Sigmoid colon (tissue), 7 donors: ENCODE measurements at regions of chr2 and their contacts with region 1.

Region 1: GRCh38 chr2:27281855-27282559 is at the start of gene TRIM54:
- DNase-seq: no peak
- H3K4me3 ChIP-seq: no peak within 1 kb of the TSS
- H3K27ac ChIP-seq: no peak within 1 kb of the TSS
- H3K4me1 ChIP-seq: no peaks in the 10 kb centered on the region
- H3K27me3 ChIP-seq: peaks cover 0 to 35% (median 4%) of the 10 kb centered on the region in 3 donors
- CTCF ChIP-seq: no peak
- EP300 ChIP-seq: no peak
- POLR2A ChIP-seq: no peak
- total RNA-seq, gene TRIM54: 0.41 TPM in 1 of 4 donors, not detected in the others

Region 2: DNA sequence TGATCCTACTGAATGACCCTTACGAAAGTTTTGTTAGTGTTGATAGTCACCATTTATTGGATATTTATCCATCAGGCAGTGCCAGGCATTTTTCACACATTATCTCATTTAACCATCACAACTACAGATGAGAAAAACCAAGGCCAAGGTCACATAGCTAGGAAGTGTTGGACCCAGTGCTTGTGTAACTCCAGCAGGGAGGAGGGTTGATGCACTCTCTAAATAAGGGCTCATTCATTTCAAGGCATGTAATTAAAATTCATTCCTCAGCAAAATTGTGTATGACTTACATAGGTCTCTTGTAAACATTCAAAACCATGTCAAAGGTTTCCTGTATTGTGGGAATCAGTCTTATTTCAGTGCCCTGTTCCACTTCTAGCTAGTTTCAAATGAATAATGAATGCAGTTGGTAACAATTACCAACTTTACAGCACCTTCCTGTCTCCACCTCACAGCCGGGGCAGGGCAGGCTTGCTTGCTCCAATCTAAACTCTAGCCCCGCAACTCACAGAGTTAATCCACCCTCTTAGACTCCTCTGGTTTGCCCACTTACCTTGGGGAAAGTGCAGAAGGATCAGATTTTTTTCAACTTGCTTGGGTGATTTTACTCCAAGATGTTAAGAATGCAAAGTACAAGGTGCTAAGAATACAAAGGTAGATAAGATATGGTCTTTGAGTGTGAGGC is 317.4 kb before region 1 on chr2:
- intact Hi-C with region 1: loop called (anchors 5 kb)
- DNase-seq: no peak
- H3K4me3 ChIP-seq: no peak overlapping the region
- H3K27ac ChIP-seq: no peak overlapping the region
- H3K4me1 ChIP-seq: peaks cover 0 to under 1% (median 0%) of the 10 kb centered on the region in 4 donors
- H3K27me3 ChIP-seq: peaks cover 0 to 11% (median 0%) of the 10 kb centered on the region in 3 donors
- CTCF ChIP-seq: no peak
- EP300 ChIP-seq: no peak
- POLR2A ChIP-seq: no peak

Region 3: DNA sequence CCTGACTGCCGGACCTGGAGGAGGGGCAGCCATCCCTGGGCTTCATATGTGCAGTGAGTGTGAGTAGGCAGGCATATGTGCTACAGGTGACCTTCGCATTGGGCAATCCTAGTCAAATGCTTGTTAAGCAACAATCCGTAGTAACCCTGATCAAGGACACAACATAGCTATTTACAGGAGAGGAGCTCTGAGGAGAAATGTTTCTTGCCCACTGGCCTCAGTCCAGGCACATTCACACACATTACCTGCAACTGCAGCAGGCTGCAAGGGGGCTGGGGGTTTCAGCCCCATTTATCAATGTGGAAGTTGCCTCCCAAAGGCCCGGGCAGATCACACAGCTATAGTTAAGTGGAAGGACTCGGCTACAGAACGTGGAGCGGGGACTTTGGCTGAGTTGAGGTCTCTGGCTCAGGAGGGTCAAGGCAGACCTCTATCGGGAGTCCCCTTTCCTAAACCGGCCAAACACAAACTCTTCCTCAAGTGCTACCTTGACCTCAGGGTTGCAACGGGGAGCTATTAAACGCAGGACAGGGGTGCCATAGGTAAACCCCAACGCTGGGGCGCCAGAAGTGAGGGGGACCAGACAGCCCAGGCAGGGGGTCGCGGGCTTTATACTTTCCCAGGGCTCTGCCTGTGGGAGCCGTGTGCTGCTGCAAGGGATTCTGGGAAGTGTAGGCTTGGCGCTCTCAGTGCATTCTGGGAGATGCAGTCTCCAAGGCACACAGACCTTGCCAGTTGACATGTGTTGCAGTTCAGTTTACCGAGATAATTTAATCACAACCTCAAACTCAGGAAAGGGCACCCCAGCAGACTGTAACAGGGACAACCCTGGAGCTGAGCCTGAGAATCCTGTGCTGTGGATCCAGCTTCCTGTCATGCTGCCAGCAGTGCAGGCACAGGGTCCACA is 186.0 kb before region 1 on chr2:
- intact Hi-C with region 1: loop called (anchors 1 kb)
- DNase-seq: no peak
- H3K4me3 ChIP-seq: peak overlapping the region; percentile 6 to 44 (median 34)
- H3K27ac ChIP-seq: peak overlapping the region in 1 of 4 donors; percentile 25
- H3K4me1 ChIP-seq: peaks cover 0 to 12% (median 6%) of the 10 kb centered on the region in 4 donors
- H3K27me3 ChIP-seq: no peaks in the 10 kb centered on the region
- CTCF ChIP-seq: no peak
- EP300 ChIP-seq: no peak
- POLR2A ChIP-seq: no peak

Region 4: GRCh38 chr2:27143285-27143684 is 138.7 kb before region 1 on chr2:
- intact Hi-C with region 1: no loop called
- DNase-seq: no peak
- H3K4me3 ChIP-seq: no peak overlapping the region
- H3K27ac ChIP-seq: no peak overlapping the region
- H3K4me1 ChIP-seq: no peaks in the 10 kb centered on the region
- H3K27me3 ChIP-seq: no peaks in the 10 kb centered on the region
- CTCF ChIP-seq: no peak
- EP300 ChIP-seq: no peak
- POLR2A ChIP-seq: no peak

Region 5: DNA sequence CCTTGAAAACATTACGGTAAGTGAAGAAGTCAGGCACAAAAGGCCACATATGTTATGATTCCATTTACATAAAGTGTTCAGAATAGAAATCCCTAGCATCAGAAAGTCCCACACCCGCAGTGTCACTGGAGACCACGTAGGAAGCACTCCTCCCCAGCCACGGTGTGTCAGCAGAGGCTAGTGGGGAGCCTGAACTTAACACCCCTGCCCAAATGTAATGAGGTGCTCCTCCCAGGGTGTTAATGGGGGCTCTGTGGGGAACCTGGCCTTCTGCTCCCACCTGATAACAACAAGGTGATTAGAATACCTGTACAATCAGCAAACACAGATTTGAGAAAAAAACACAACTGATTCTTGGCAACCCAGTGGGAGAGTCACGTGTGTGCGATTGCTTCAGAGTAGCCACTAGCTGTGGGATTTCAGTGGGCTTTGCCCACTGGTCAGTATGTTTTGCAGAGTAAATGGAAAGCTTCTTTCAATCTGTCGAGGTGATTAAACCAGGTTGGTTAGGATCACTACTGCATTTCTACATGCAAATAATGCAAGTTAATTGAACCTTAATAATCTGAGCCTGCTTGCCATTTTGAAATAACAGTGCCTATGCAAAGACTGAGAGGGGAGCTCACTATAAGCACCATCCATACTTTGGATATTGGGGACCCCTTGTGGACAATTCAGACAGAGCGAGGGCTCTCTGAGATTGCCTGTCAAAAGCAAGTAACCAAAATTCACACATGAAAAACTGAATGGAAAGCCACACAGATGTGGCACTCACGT is 90.8 kb before region 1 on chr2:
- intact Hi-C with region 1: no loop called
- DNase-seq: no peak
- H3K4me3 ChIP-seq: no peak overlapping the region
- H3K27ac ChIP-seq: no peak overlapping the region
- H3K4me1 ChIP-seq: no peaks in the 10 kb centered on the region
- H3K27me3 ChIP-seq: no peaks in the 10 kb centered on the region
- CTCF ChIP-seq: peak in 3 of 4 experiments; percentile 11 to 51 (median 25)
- EP300 ChIP-seq: no peak
- POLR2A ChIP-seq: no peak